Ascending aorta (tissue), 2 donors: ENCODE measurements at regions of chr20 and their contacts with region 1.

Region 1: GRCh38 chr20:23361598-23362384 is at the start of gene GZF1:
- DNase-seq: peak; percentile 94 to 99
- H3K4me3 ChIP-seq: peak within 1 kb of the TSS; percentile 76 to 77
- H3K27ac ChIP-seq: peak within 1 kb of the TSS; percentile 99 to 100
- H3K4me1 ChIP-seq: peaks cover 6 to 25% of the 10 kb centered on the region in 2 donors
- H3K27me3 ChIP-seq: no peaks in the 10 kb centered on the region
- CTCF ChIP-seq: peak in 1 of 3 experiments; percentile 25
- total RNA-seq, gene GZF1: 54.8 TPM

Region 2: GRCh38 chr20:22333885-22334545 is 1027.8 kb before region 1 on chr20:
- intact Hi-C with region 1: loop called (anchors 10 kb)
- DNase-seq: no peak
- H3K4me3 ChIP-seq: no peak overlapping the region
- H3K27ac ChIP-seq: no peak overlapping the region
- H3K4me1 ChIP-seq: no peaks in the 10 kb centered on the region
- H3K27me3 ChIP-seq: no peaks in the 10 kb centered on the region
- CTCF ChIP-seq: peak; percentile 36 to 75 (median 67)

Region 3: GRCh38 chr20:23350196-23350903 is 11.4 kb before region 1 on chr20 and contains the start of gene NXT1:
- intact Hi-C with region 1: loop called (anchors 1 kb)
- DNase-seq: peak; percentile 93 to 99
- H3K4me3 ChIP-seq: peak within 1 kb of the TSS; percentile 93 to 97
- H3K27ac ChIP-seq: peak within 1 kb of the TSS; percentile 99 to 100
- H3K4me1 ChIP-seq: peaks cover 3 to 18% of the 10 kb centered on the region in 2 donors
- H3K27me3 ChIP-seq: no peaks in the 10 kb centered on the region
- CTCF ChIP-seq: peak in 1 of 3 experiments; percentile 0
- total RNA-seq, gene NXT1: 50.0 TPM

Region 4: DNA sequence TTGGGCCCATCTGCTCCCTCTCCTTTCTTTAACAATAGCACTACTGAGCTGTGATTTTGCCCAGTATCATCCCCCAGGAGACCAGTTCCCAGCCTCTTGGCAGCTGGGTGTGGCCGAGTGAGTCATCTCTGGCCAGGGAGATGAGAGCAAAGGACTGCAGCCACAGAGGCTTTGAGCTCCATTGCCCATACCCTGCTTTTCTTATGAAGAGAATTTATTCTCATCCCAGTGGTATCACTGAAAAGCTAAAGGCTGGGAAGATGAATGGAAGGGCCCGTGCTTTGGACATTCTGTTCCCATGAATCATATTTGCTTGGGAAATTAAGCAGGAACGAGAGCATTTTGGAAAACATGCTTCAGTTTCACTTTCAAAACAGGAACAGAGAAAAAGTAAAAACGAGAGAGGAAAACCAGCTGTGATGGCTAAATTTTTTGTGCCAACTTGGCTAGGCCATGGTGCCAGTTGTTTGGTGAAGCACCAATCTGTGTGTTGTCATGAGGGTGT is 261.1 kb after region 1 on chr20:
- intact Hi-C with region 1: loop called (anchors 5 kb)
- DNase-seq: peak; percentile 50 to 88
- H3K4me3 ChIP-seq: peak overlapping the region; percentile 34 to 55
- H3K27ac ChIP-seq: peak overlapping the region; percentile 88 to 91
- H3K4me1 ChIP-seq: peaks cover 0 to 17% of the 10 kb centered on the region in 2 donors
- H3K27me3 ChIP-seq: no peaks in the 10 kb centered on the region
- CTCF ChIP-seq: no peak

Region 5: DNA sequence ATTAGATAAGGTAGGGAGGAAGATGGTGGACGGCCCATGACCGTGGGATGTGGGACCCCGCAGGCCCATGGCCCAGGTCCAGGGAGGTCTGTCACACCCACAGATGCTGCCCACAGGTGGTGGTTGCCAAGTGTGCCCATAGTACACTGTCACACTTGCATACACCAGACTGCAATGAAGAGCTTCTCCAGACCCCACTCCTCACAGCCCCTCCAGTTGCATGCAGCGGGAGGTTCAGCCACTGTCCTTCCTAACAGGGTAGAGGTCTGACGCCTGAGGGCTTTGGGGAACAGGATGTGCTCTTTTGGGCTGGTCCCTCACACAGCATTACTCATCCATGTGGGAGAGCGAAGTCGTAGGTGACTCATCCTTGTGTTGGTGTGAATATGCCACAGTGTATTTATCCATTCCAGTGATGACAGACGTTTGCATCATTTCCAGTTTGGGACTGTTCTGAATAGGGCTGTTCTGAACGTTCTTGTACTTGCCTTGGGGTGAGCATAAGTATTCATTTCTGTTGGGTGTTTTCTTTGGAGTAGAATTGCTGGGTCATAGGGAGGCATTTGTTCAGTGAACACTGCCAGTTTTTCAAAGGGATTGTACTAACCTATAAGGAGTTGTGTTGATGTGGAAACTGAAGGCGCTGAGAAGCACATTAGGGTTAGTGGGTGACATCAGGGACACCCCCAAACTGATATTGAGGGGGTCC is 1876.0 kb after region 1 on chr20:
- intact Hi-C with region 1: loop called (anchors 10 kb)
- DNase-seq: peak; percentile 78 to 94
- H3K4me3 ChIP-seq: no peak overlapping the region
- H3K27ac ChIP-seq: peak overlapping the region; percentile 83 to 97
- H3K4me1 ChIP-seq: peaks cover 21 to 48% of the 10 kb centered on the region in 2 donors
- H3K27me3 ChIP-seq: no peaks in the 10 kb centered on the region
- CTCF ChIP-seq: no peak